WTC11 (cell line): ENCODE measurements at regions of chr19 and their contacts with region 1.

Region 1: GRCh38 chr19:10251792-10252694 is at the start of gene MRPL4:
- DNase-seq: peak; percentile 96
- ATAC-seq: peak; percentile 98
- H3K4me3 Mint-ChIP-seq: peak within 1 kb of the TSS; percentile 95
- H3K27ac Mint-ChIP-seq: peak within 1 kb of the TSS; percentile 96
- H3K4me1 Mint-ChIP-seq: peaks cover 5% of the 10 kb centered on the region
- H3K27me3 Mint-ChIP-seq: peaks cover 2% of the 10 kb centered on the region; the same call in 1 of the 2 replicates
- CTCF ChIP-seq: no peak
- total RNA-seq, gene MRPL4: 109 to 112 TPM (median 110 TPM) in 3 replicates

Region 2: GRCh38 chr19:10167459-10167858 is 84.6 kb before region 1 on chr19:
- CTCF ChIA-PET with region 1: interaction called, 10 read pairs
- POLR2A ChIA-PET with region 1: no interaction called
- DNase-seq: no peak
- ATAC-seq: no peak
- H3K4me3 Mint-ChIP-seq: no peak overlapping the region
- H3K27ac Mint-ChIP-seq: no peak overlapping the region
- H3K4me1 Mint-ChIP-seq: no peaks in the 10 kb centered on the region
- H3K27me3 Mint-ChIP-seq: no peaks in the 10 kb centered on the region
- CTCF ChIP-seq: no peak

Region 3: DNA sequence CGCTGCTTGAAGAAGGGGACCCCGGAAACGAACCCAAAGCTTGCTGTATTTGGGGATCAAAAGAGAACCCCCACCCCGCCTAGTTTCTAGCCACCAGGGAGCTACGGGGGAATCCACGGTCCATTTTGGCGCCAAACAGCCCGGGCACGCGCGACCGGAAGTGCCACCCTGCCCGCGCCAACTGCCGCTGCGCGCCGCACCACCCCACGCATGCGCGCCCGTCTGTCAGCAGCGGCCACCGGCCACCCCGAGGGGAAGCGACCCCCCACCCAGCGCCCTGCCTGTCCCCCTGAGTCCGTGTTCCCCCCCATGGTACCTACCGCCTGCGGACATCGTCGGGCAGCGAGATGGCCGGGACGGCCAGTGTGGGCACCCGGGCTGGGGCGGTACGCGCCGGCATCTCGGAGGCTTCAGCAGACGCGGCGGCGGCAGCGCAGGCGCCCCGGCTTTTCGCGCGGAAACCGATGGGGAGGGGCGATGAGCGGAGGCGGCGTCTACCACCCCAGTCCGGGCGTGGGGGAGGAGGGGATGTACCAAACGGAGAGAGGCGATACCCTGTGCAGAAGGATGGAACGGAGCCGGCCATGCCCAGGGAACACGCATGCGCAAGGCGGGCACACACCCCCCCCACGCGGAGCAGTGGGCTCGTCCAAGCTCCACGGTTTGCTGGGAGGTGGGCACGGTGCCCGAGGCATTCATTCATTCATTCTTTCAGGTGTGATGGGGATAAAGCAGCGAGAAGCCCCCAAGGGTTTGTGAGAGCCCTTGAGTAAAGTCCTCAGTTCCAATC is 57.3 kb before region 1 on chr19 and contains the start of gene DNMT1:
- CTCF ChIA-PET with region 1: interaction called, 25 read pairs
- POLR2A ChIA-PET with region 1: no interaction called
- DNase-seq: peak; percentile 97
- ATAC-seq: peak; percentile 98
- H3K4me3 Mint-ChIP-seq: peak within 1 kb of the TSS; percentile 94
- H3K27ac Mint-ChIP-seq: peak within 1 kb of the TSS; percentile 85
- H3K4me1 Mint-ChIP-seq: peaks cover 8% of the 10 kb centered on the region
- H3K27me3 Mint-ChIP-seq: no peaks in the 10 kb centered on the region
- CTCF ChIP-seq: no peak
- total RNA-seq, gene DNMT1: 174 to 210 TPM (median 191 TPM) in 3 replicates

Region 4: DNA sequence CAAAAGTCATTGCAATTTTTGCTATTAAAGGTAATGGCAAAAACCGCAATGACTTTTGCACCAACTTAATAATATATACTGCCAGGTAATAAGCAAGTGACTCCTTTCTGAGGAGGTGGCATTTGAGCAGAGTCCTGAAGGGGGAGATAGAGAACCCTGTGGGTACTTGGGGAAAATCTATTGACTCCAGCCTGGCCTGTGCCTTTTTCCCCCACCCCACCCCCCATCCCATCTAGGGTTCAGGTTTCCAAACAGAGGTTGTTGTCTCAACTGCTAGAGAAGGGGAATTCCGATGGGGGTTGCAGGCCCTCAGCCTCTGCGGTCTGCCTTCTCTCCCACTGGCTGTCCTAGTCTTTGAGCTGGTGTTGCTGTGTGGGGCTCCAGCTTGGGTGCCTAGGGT is 32.4 kb before region 1 on chr19:
- CTCF ChIA-PET with region 1: interaction called, 15 read pairs
- POLR2A ChIA-PET with region 1: interaction called, 4 read pairs
- DNase-seq: peak; percentile 57
- ATAC-seq: peak; percentile 89
- H3K4me3 Mint-ChIP-seq: no peak overlapping the region
- H3K27ac Mint-ChIP-seq: no peak overlapping the region
- H3K4me1 Mint-ChIP-seq: no peaks in the 10 kb centered on the region
- H3K27me3 Mint-ChIP-seq: no peaks in the 10 kb centered on the region
- CTCF ChIP-seq: 0 out of 2 replicates have a peak, but pooled peaks have one; percentile 22

Region 5: GRCh38 chr19:10279737-10280442 is 27.8 kb after region 1 on chr19:
- CTCF ChIA-PET with region 1: no interaction called
- POLR2A ChIA-PET with region 1: no interaction called
- DNase-seq: no peak
- ATAC-seq: no peak
- H3K4me3 Mint-ChIP-seq: no peak overlapping the region
- H3K27ac Mint-ChIP-seq: 0 out of 2 replicates have a peak overlapping the region, but pooled peaks have one; percentile 2
- H3K4me1 Mint-ChIP-seq: no peaks in the 10 kb centered on the region
- H3K27me3 Mint-ChIP-seq: peaks cover 4% of the 10 kb centered on the region
- CTCF ChIP-seq: no peak